ENCODE measurements at regions of chr21 and their contacts with region 1.

Region 1: GRCh38 chr21:45554477-45555175 is 12.4 kb upstream of the SLC19A1 start:
- DNase-seq: peak; percentile 38 to 96
- H3K4me3 ChIP-seq: peak overlapping the region; percentile 13
- CTCF ChIP-seq: peak in 1 of 3 donors; percentile 50
- POLR2A ChIP-seq: no peak

Region 2: DNA sequence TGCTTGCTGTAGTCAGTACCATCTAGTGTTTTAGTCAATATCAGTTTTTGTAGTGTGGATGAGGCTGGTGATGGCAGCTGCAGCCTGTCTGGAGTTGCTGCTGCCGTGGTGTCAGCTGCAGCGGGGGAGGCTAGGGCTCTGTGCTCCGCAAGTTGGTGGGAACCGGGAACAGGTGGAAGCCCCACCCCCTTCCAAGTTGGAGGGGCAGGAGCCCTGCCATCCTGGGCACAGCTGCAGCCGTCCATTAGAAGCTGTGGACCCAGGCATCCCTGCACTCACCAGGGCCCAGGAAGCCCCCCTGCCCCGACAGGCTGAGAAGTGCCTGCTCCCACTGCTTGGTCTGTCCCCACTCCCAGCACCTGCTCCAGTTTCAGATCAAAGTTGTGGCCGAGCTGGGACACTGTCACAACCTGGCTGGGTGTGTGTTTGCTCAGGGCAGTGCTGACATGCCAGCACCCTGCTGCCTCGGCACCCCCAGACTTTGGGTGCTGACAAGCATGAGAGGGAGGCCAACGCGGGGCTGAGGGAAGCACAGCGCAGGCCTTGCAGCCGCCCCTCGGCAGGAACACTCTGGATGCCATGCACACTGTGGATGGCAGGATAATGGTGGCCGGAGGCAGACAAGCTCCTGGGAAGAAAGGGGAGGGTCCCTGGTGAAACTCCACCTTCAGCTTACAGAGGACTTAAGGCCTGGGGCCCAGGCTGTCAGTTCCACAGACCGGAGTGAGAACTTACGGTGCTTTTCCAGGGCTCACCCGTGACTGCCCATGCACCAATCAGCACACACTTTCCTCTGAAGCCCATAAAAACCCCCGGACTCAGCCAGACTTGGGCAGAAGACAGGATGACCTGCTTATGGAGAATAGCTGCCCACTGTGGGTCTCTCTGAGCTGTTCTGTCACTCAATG is 393.3 kb before region 1 on chr21:
- intact Hi-C with region 1: no loop called
- DNase-seq: peak in 1 of 2 donors; percentile 78
- H3K4me3 ChIP-seq: no peak overlapping the region
- CTCF ChIP-seq: no peak
- POLR2A ChIP-seq: no peak

Region 3: GRCh38 chr21:45820171-45821091 is 265.8 kb after region 1 on chr21:
- intact Hi-C with region 1: loop called (anchors 2 kb)
- DNase-seq: peak; percentile 40 to 89
- H3K4me3 ChIP-seq: no peak overlapping the region
- CTCF ChIP-seq: peak in 1 of 3 donors; percentile 35
- POLR2A ChIP-seq: no peak